Pancreas (tissue), 10 donors: ENCODE measurements at regions of chr7 and their contacts with region 1.

Region 1: DNA sequence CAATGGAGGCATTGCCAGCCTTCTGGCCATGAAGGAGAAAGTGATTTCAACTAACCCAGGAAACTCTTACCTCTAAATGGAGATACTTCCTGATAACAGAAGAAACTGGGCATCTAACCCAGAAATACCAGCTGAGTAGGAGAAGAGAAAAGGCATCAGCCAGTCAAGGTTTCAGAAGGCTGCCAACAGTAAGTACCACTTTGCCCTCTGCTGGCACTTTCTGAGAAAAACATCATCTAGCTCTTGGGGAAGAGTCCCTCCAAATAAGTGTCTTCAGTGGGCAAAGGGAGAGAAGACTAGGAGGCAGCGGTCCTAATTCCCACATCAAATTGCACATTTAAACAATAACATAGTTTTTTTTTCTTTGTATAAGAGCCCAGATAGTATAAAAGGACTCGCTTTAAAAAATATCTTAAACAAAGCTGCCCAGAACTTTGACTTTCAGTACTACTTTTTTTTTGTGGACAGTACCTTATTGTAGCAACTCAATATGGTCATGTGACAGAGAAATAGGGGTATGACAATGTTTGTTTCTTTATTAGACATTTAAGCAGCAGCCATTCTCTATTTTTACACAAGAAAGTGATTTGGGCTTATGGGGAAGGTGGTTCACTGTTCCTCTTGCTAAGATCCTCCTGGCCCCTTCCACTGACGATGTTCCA is 157.3 kb downstream of the CTTNBP2 start:
- DNase-seq: peak in 2 of 6 donors; percentile 11 to 32
- ATAC-seq: peak; percentile 51 to 85 (median 82)
- H3K4me3 ChIP-seq: no peak overlapping the region
- H3K27ac ChIP-seq: peak overlapping the region in 2 of 4 donors; percentile 37 to 41
- H3K4me1 ChIP-seq: peaks cover 0 to 19% (median 5%) of the 10 kb centered on the region in 3 donors
- H3K27me3 ChIP-seq: no peaks in the 10 kb centered on the region
- CTCF ChIP-seq: peak in 2 of 4 donors; percentile 24 to 29

Region 2: DNA sequence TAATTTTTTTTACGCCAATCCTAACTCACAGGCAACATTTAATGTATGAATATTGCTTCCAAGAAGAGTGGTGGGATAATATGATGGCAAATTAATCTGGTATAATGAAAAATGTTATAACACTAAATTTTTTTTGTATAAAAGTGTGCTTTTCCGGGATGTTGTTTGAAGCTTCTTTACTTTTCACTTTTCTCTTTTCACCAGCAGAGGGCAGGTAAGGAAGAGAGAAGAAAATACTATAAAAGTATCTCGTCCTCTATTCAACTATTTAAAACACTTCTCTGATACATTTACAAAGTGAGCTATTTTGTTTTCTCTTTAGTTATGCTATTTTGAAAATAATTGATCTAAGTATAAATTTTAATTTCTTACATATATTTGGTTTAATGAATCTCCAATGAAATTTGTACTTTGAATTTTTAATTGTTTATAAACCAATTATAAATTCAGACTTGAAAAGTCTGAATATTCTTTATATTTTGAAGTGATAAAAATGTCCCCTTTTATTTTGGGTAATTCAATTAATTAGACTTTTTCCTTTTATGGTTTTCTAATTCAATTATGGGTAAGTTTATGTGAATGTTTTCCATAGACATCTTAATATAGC is 256.8 kb before region 1 on chr7:
- intact Hi-C with region 1: loop called in 1 of 3 experiments (anchors 10 kb)
- DNase-seq: no peak
- ATAC-seq: peak in 3 of 4 donors; percentile 67 to 78 (median 72)
- H3K4me3 ChIP-seq: no peak overlapping the region
- H3K27ac ChIP-seq: no peak overlapping the region
- H3K4me1 ChIP-seq: no peaks in the 10 kb centered on the region
- H3K27me3 ChIP-seq: no peaks in the 10 kb centered on the region
- CTCF ChIP-seq: peak; percentile 21 to 46 (median 42)